Activated CD8-positive, alpha-beta T cell treated with anti-CD3 and anti-CD28 coated beads for 36 hours (primary cell): ENCODE measurements at regions of chr14 and their contacts with region 1.

Region 1: GRCh38 chr14:68734231-68734775 is 58.6 kb downstream of the ZFP36L1 start:
- DNase-seq: peak; percentile 86
- ATAC-seq: peak; percentile 80
- H3K4me3 Mint-ChIP-seq: peak overlapping the region; percentile 31
- H3K27ac Mint-ChIP-seq: peak overlapping the region; percentile 86
- H3K4me1 Mint-ChIP-seq: peaks cover 51% of the 10 kb centered on the region
- H3K27me3 Mint-ChIP-seq: no peaks in the 10 kb centered on the region
- CTCF ChIP-seq: no peak

Region 2: GRCh38 chr14:68685419-68686204 is 48.7 kb before region 1 on chr14:
- CTCF ChIA-PET with region 1: no interaction called
- POLR2A ChIA-PET with region 1: interaction called, 4 read pairs
- intact Hi-C with region 1: loop called (anchors 5 kb)
- DNase-seq: peak; percentile 92
- ATAC-seq: peak; percentile 90
- H3K4me3 Mint-ChIP-seq: peak overlapping the region; percentile 42
- H3K27ac Mint-ChIP-seq: peak overlapping the region; percentile 87
- H3K4me1 Mint-ChIP-seq: peaks cover 56% of the 10 kb centered on the region
- H3K27me3 Mint-ChIP-seq: no peaks in the 10 kb centered on the region
- CTCF ChIP-seq: no peak

Region 3: GRCh38 chr14:68718023-68718995 is 16.0 kb before region 1 on chr14:
- CTCF ChIA-PET with region 1: interaction called, 10 read pairs
- POLR2A ChIA-PET with region 1: interaction called, 3 read pairs
- intact Hi-C with region 1: loop called (anchors 2 kb)
- DNase-seq: peak; percentile 31
- ATAC-seq: peak; percentile 41
- H3K4me3 Mint-ChIP-seq: no peak overlapping the region
- H3K27ac Mint-ChIP-seq: no peak overlapping the region
- H3K4me1 Mint-ChIP-seq: peaks cover 42% of the 10 kb centered on the region
- H3K27me3 Mint-ChIP-seq: no peaks in the 10 kb centered on the region
- CTCF ChIP-seq: peak; percentile 60

Region 4: DNA sequence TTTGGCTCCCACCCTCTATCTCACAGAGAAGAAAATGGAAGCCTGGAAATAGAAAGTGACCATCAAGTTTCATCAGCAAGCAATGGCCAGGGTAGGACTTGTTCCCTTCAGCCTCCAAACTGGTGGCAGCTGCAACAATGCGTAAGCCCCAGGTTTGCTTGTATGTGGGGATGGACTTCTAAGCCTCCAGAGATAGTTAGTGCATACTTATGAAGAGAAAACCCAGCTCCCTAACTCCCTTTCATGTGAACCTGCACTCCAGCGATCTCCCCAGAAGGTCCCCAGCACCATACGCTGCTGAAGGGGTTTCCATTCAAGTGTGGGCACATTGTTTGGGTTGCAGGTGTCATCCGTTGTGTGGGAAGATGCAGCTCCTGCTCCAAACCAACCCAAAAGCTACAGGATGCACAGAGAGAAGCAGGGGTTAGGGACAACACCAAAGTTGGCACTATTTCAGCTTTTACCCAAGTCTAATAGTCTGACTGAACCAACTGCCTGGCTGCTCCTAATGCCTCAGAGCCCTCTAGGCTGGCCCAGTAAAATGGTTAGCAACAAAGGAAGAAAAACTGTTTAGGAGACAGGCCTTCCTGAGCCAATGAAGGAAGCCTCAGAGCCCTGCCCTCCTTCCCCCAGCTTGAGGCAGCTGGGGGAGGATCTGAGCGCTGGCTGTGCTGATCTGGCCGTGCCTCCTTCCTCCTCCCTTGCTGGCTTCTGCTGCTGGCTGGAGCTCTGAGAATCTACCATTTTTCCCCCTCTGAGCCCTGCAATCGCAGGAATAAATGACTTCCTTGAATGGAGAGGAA is 46.3 kb after region 1 on chr14:
- CTCF ChIA-PET with region 1: interaction called, 8 read pairs
- POLR2A ChIA-PET with region 1: interaction called, 7 read pairs
- intact Hi-C with region 1: loop called (anchors 2 kb)
- DNase-seq: peak; percentile 55
- ATAC-seq: peak; percentile 24
- H3K4me3 Mint-ChIP-seq: peak overlapping the region; percentile 52
- H3K27ac Mint-ChIP-seq: peak overlapping the region; percentile 90
- H3K4me1 Mint-ChIP-seq: peaks cover 67% of the 10 kb centered on the region
- H3K27me3 Mint-ChIP-seq: no peaks in the 10 kb centered on the region
- CTCF ChIP-seq: no peak